ENCODE measurements at regions of chr5 and their contacts with region 1.

Region 1: GRCh38 chr5:145008876-145009530 is 826.1 kb downstream of the PRELID2 start:
- DNase-seq: no peak
- H3K4me3 ChIP-seq: no peak overlapping the region
- H3K27ac ChIP-seq: no peak overlapping the region
- H3K4me1 ChIP-seq: no peaks in the 10 kb centered on the region
- H3K27me3 ChIP-seq: no peaks in the 10 kb centered on the region
- CTCF ChIP-seq: no peak
- POLR2A ChIP-seq: no peak

Region 2: GRCh38 chr5:144873076-144873475 is 135.9 kb before region 1 on chr5:
- intact Hi-C with region 1: no loop called
- DNase-seq: no peak
- H3K4me3 ChIP-seq: no peak overlapping the region
- H3K27ac ChIP-seq: no peak overlapping the region
- H3K4me1 ChIP-seq: no peaks in the 10 kb centered on the region
- H3K27me3 ChIP-seq: no peaks in the 10 kb centered on the region
- CTCF ChIP-seq: no peak
- POLR2A ChIP-seq: no peak

Region 3: GRCh38 chr5:146345578-146346366 is 1336.8 kb after region 1 on chr5:
- intact Hi-C with region 1: loop called (anchors 5 kb)
- DNase-seq: no peak
- H3K4me3 ChIP-seq: no peak overlapping the region
- H3K27ac ChIP-seq: no peak overlapping the region
- H3K4me1 ChIP-seq: peaks cover 10% of the 10 kb centered on the region
- H3K27me3 ChIP-seq: peaks cover 16% of the 10 kb centered on the region
- CTCF ChIP-seq: no peak
- POLR2A ChIP-seq: no peak

Measured in vagina (tissue), 2 donors.